Heart left ventricle (tissue), 16 donors: ENCODE measurements at regions of chr5 and their contacts with region 1.

Region 1: DNA sequence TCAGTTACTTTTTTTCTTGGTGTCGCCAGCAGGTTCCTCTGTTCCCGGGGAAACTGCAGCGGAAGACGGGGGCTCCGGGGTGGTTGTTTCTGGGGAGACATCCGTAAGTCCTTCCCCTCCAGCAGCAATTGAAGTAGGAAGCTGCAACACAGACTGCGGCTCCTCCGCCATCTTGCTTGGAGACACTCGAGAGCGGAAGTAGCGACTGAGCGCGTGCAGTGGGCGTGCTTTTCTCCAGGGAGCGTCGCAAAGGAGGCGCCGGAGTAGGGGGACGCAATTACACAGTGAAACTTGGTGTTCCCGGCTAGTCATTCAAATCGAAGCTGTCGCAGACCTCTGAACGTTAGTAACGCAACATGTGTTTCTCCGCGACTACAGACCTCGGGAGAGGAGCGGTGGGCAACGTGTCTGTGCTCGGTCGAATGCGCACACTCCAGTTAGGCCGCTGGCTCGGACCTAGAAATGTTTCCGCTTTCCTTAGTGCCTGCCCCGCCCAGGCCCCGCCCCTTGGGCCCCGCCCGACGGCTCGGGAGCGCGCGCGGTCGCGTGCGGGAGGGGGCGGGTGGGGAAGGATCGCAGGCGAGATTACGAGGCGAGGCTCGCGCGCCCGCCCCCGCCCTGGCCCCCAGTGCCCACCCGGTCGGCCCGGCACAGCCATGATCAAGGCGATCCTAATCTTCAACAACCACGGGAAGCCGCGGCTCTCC is at the starts of genes AP3S1 and ATG12:
- DNase-seq: peak; percentile 92 to 95 (median 93)
- ATAC-seq: peak; percentile 91 to 97 (median 96)
- H3K4me3 ChIP-seq: peak within 1 kb of the TSS; percentile 73 to 97 (median 86)
- H3K27ac ChIP-seq: peak within 1 kb of the TSS; percentile 88 to 98 (median 96)
- H3K4me1 ChIP-seq: peaks cover 0 to 74% (median 60%) of the 10 kb centered on the region in 12 donors
- H3K27me3 ChIP-seq: no peaks in the 10 kb centered on the region
- CTCF ChIP-seq: no peak
- POLR2A ChIP-seq: peak in 1 of 2 donors; percentile 42
- total RNA-seq, gene AP3S1: 20.3 to 56.4 (median 46.6) TPM
- total RNA-seq, gene ATG12: 15.3 to 29.2 (median 20.8) TPM

Region 2: DNA sequence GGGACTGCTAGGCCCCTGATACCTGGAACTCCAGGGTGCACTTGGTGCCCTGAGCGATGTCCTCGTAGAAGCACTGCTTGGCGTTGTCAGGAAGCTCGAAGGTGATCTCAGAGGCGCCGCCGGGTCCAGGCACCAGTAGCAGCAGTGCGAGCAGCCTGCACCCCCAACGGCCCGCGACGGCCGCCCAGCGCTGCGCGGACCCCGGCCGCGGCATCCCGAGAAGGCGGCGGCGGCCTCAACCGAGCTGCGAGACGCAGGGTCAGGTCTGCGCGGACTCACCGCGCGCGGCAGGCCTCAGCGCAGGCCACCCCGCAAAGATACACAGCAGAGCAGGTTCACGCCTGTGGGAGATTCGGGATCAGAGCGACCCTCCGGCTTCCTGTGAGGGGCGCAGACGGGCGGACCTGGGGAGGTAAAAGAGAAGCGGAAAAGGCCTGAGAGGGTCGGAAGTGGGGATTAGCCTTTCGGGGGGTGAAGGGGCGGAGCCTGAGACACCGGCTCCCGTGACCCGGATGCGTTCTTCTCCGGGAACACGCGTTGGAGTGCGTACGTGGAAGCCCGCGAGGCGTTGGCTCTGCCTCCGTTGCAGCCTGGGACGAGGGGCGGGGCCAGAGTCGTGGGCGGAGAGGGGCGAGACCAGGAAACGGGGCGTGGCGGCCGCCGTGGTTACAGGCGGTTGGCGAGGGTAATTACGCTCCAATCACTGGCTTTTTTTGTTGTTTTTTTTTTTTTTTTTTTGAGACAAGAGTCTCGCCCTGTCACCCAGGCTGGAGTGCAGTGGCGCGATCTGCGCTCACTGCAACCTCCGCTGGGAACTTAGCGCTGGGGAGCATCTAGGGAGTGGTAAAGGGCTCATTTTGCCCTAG is 215.7 kb before region 1 on chr5 and contains the start of gene TMED7:
- intact Hi-C with region 1: loop called in 5 of 10 experiments (anchors 2 to 5 kb)
- DNase-seq: peak; percentile 100
- ATAC-seq: peak; percentile 99 to 100 (median 99)
- H3K4me3 ChIP-seq: peak within 1 kb of the TSS; percentile 65 to 98 (median 84)
- H3K27ac ChIP-seq: peak within 1 kb of the TSS; percentile 79 to 99 (median 94)
- H3K4me1 ChIP-seq: peaks cover 13 to 50% (median 39%) of the 10 kb centered on the region in 12 donors
- H3K27me3 ChIP-seq: no peaks in the 10 kb centered on the region
- CTCF ChIP-seq: peak in 3 of 12 donors; percentile 5 to 20 (median 13)
- POLR2A ChIP-seq: peak; percentile 39 to 97
- total RNA-seq, gene TMED7: 58.4 to 99.1 (median 82.3) TPM

Region 3: GRCh38 chr5:115634343-115635132 is 207.0 kb before region 1 on chr5:
- intact Hi-C with region 1: loop called in 7 of 10 experiments (anchors 2 to 5 kb)
- DNase-seq: peak; percentile 82 to 89 (median 86)
- ATAC-seq: peak; percentile 78 to 98 (median 96)
- H3K4me3 ChIP-seq: peak overlapping the region in 10 of 12 donors; percentile 0 to 56 (median 48)
- H3K27ac ChIP-seq: peak overlapping the region in 10 of 12 donors; percentile 2 to 82 (median 50)
- H3K4me1 ChIP-seq: peaks cover 0 to 10% (median 0%) of the 10 kb centered on the region in 12 donors
- H3K27me3 ChIP-seq: no peaks in the 10 kb centered on the region
- CTCF ChIP-seq: peak; percentile 79 to 97 (median 90)
- POLR2A ChIP-seq: no peak

Region 4: GRCh38 chr5:116084871-116085715 is 243.6 kb after region 1 on chr5 and contains the start of gene COMMD10:
- intact Hi-C with region 1: loop called in 2 of 10 experiments (anchors 10 kb)
- DNase-seq: peak; percentile 75 to 90 (median 83)
- ATAC-seq: peak; percentile 87 to 94 (median 92)
- H3K4me3 ChIP-seq: peak within 1 kb of the TSS; percentile 75 to 98 (median 91)
- H3K27ac ChIP-seq: peak within 1 kb of the TSS; percentile 64 to 97 (median 92)
- H3K4me1 ChIP-seq: peaks cover 0 to 40% (median 24%) of the 10 kb centered on the region in 12 donors
- H3K27me3 ChIP-seq: no peaks in the 10 kb centered on the region
- CTCF ChIP-seq: no peak
- POLR2A ChIP-seq: peak in 1 of 2 donors; percentile 38
- total RNA-seq, gene COMMD10: 25.2 to 42.2 (median 29.8) TPM